ENCODE measurements at regions of chr15 and their contacts with region 1.

Region 1: DNA sequence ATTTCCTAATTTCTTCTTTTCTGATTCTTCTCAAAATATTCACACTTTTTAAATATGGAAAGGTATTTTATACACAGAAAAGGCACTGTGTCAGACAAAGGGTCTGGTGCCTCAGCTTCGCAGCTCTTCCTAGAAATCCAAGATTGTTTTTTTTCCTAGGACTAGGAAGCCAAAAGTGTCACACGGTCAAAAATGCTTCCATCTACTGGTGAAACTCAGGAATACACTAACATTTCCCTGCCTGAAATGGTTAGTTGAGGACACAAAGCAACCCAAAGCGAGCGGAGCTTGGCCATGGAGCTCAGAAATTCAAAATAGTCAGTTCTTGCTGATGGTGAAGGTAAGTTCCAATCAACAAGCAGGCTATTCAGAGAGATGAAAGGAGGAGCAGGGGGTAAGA is 426.5 kb upstream of the RASGRP1 start:
- DNase-seq: no peak
- H3K4me3 ChIP-seq: no peak overlapping the region
- H3K27ac ChIP-seq: no peak overlapping the region
- H3K4me1 ChIP-seq: no peaks in the 10 kb centered on the region
- H3K27me3 ChIP-seq: no peaks in the 10 kb centered on the region
- CTCF ChIP-seq: peak in 3 of 4 experiments; percentile 36 to 54 (median 38)
- POLR2A ChIP-seq: no peak

Region 2: DNA sequence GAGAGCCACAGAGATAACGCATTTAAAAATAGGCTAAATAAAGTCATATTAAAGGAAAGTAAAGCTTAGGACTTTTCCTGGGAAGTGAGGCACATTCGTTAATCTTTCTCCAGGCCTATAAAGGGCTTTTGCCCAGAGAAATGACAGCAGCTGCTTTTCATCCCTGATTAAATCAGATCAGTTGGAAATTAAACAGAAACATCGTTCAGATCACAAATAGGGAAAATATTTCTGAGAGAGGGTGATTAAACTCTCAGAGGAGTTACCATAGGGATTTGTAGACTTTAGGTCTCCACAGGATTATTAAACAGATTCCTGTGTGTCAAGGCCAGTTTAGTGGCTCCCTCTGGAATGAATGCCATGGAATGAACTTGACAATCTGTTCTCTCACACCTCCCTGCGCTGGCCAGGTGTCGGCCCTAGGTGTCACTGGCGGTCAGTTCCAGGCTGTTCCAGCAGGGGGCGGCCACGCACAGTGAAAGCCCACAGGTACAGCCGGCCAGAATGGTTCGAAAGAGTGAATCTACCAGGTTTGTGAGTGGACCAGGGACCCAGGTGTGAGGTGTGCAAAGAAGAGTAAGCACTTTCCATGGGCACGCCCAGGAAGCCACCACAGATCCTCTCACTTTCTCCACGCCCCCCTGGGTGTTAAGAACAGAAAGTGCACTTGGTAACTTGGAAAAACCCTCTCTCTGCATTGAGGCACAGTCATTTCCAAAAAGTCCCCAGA is 173.5 kb before region 1 on chr15:
- intact Hi-C with region 1: loop called (anchors 5 kb)
- DNase-seq: peak; percentile 88
- H3K4me3 ChIP-seq: no peak overlapping the region
- H3K27ac ChIP-seq: no peak overlapping the region
- H3K4me1 ChIP-seq: no peaks in the 10 kb centered on the region
- H3K27me3 ChIP-seq: no peaks in the 10 kb centered on the region
- CTCF ChIP-seq: peak; percentile 97 to 99 (median 98)
- POLR2A ChIP-seq: no peak

Region 3: GRCh38 chr15:38941399-38941953 is 49.6 kb before region 1 on chr15:
- intact Hi-C with region 1: loop called (anchors 10 kb)
- DNase-seq: peak; percentile 4
- H3K4me3 ChIP-seq: no peak overlapping the region
- H3K27ac ChIP-seq: no peak overlapping the region
- H3K4me1 ChIP-seq: no peaks in the 10 kb centered on the region
- H3K27me3 ChIP-seq: no peaks in the 10 kb centered on the region
- CTCF ChIP-seq: no peak
- POLR2A ChIP-seq: no peak

Region 4: GRCh38 chr15:39453500-39454073 is 462.5 kb after region 1 on chr15:
- intact Hi-C with region 1: no loop called
- DNase-seq: no peak
- H3K4me3 ChIP-seq: no peak overlapping the region
- H3K27ac ChIP-seq: no peak overlapping the region
- H3K4me1 ChIP-seq: peaks cover 13% of the 10 kb centered on the region
- H3K27me3 ChIP-seq: no peaks in the 10 kb centered on the region
- CTCF ChIP-seq: no peak
- POLR2A ChIP-seq: no peak